Natural killer cell (primary cell): ENCODE measurements at regions of chr12 and their contacts with region 1.

Region 1: DNA sequence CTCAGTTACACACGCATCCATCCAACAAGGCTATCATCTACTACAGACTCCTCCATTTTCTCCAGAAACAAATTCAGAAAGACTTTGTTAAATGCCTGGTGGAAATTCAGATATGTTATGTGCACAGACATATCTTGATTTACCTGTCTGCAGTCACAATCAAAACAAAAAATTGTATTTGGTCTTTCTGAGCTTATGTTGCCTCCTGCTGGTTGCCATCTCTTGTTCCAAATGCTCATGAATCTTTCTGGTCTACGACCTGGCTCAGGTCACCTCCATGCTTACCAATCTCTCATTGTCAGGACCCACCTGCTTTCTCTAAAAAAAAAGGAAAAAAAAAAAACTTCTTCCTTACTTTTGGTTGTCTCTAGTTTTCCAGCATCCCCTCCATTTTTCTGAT is 169.2 kb upstream of the PLXNC1 start:
- DNase-seq: peak in 1 of 2 donors; percentile 59
- ATAC-seq: peak in 1 of 3 donors; percentile 55
- H3K4me3 ChIP-seq: no peak overlapping the region
- H3K4me3 Mint-ChIP-seq: no peak overlapping the region
- H3K27ac ChIP-seq: no peak overlapping the region
- H3K27ac Mint-ChIP-seq: peak overlapping the region in 1 of 2 donors; percentile 57
- H3K4me1 ChIP-seq: peaks cover 14% of the 10 kb centered on the region
- H3K4me1 Mint-ChIP-seq: peaks cover 12 to 38% of the 10 kb centered on the region in 2 donors
- H3K27me3 ChIP-seq: no peaks in the 10 kb centered on the region
- H3K27me3 Mint-ChIP-seq: peaks cover 0 to 8% of the 10 kb centered on the region in 2 donors
- CTCF ChIP-seq: peak; percentile 22

Region 2: DNA sequence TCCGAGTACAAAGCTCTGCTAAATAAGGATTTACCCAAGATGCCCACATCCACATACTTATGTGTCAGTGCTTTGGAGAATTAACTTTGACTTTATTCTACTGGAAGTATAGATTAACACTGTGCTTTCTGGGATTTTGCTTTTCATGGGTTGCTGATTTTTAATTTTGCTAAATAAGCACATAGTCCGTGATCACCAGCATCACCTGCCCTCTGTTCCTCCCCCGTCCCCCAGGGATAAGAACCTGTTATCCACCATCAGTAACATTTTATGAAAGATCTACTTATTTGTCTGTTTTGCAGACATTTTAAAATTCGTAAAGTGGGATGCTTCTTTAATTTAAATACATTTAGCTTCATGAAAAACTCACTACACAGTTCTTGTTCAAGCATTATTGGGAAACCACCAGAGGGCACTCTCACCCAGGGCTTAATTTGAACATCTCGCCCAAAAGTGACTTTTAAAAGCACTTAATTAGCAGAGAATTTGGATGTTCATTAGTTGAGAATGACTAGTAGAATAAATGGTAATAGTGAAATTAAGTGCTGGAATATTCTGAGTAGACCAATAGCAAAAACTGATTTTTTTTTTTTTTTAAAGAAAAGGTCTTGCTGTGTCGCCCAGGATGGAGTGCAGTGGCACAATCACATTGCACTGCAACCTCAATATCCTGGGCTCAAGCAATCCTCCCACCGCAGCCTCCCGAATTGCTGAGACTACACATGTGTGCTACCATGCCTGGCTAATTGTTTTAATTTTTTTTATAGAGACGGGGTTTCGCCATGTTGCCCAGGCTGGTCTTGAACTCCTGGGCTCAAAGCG is 476.2 kb before region 1 on chr12:
- intact Hi-C with region 1: loop called (anchors 2 kb)
- DNase-seq: peak; percentile 43 to 80
- ATAC-seq: peak; percentile 53 to 66 (median 54)
- H3K4me3 ChIP-seq: no peak overlapping the region
- H3K4me3 Mint-ChIP-seq: no peak overlapping the region
- H3K27ac ChIP-seq: no peak overlapping the region
- H3K27ac Mint-ChIP-seq: no peak overlapping the region
- H3K4me1 ChIP-seq: no peaks in the 10 kb centered on the region
- H3K4me1 Mint-ChIP-seq: peaks cover 5% of the 10 kb centered on the region in 2 donors
- H3K27me3 ChIP-seq: no peaks in the 10 kb centered on the region
- H3K27me3 Mint-ChIP-seq: no peaks in the 10 kb centered on the region
- CTCF ChIP-seq: peak; percentile 88

Region 3: DNA sequence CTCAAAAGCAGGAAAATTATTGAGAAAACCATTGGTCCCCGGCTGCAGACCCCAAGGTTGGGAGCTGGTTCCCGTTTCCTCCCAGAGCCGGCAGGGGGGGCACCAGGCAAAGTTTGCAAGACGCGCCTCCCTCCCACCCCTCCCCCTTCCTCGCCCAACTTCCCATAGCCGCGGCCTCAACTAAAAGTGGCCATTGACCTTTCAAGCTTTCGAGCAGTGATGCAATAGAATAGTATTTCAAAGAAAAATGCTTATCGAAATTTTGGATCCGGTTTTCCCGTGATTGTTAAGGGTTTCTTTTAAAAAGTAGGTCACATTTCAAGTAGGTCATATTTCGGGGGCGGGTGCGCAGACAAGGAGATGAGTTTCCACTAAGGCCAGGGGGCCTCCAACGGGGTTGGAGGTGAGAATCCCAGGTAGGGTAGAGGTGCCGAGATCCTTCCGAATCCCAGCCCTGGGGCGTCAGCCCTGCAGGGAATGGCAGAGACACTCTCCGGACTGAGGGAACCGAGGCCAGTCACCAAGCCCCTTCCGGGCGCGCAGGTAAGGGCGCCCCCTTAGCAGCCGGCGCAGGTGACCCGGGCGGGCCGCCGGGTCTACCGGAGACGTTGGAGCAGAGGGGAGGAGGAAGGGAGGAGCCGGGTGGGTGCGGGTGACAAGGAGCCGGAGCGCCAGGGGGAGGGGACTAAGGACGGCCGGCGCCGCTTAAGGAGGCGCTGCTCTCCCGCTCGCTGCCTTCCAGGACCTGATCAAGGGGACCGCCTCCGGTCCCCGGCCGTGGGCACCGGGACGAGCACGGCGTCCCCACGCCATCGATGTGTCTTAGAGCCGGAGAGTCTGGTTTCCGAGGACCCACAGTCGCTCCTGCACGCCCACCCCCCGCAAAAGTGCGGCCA is 409.3 kb before region 1 on chr12:
- intact Hi-C with region 1: loop called (anchors 5 kb)
- DNase-seq: peak; percentile 66 to 85
- ATAC-seq: peak; percentile 40 to 63 (median 46)
- H3K4me3 ChIP-seq: peak overlapping the region; percentile 95
- H3K4me3 Mint-ChIP-seq: peak overlapping the region; percentile 95
- H3K27ac ChIP-seq: peak overlapping the region; percentile 80
- H3K27ac Mint-ChIP-seq: peak overlapping the region; percentile 86 to 89
- H3K4me1 ChIP-seq: peaks cover 26% of the 10 kb centered on the region
- H3K4me1 Mint-ChIP-seq: peaks cover 31 to 38% of the 10 kb centered on the region in 2 donors
- H3K27me3 ChIP-seq: peaks cover 5% of the 10 kb centered on the region
- H3K27me3 Mint-ChIP-seq: peaks cover 0 to 4% of the 10 kb centered on the region in 2 donors
- CTCF ChIP-seq: peak; percentile 72

Region 4: DNA sequence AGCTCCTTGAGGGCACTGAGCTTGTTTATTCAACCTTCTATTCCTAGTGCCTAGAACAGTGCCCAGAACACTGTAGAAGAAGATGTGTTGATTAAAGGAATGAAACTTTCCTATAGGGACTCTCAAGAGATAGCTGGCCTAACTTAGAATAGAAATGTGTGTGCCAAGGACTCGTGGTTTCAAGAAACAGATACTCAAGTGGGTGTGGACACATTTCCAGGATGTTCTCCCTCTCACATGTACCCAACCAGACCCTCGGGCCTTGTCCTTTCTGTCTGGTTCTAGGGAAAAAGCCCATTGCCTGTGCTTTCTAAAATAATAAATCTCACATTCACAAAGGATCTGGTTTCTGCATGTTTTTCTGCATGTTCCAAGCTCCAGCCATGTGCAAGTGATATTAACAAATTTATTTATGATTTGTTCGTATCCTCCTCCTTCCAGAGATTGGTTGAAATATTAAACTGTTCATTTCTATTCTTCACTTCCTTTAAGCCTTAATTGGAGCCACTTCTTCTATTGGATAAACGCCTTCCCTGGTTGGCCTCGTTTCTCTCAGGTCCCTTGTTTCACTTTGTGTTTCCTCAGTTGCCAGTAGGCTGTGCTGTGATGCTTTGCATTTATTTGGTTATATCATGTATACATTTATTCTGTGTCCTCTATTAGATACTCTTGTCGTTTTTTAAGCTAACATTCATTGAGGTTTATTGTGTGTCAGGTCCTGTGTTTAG is 212.2 kb before region 1 on chr12:
- intact Hi-C with region 1: loop called (anchors 1 kb)
- DNase-seq: peak in 1 of 2 donors; percentile 67
- ATAC-seq: peak; percentile 71 to 84 (median 76)
- H3K4me3 ChIP-seq: no peak overlapping the region
- H3K4me3 Mint-ChIP-seq: peak overlapping the region; percentile 11
- H3K27ac ChIP-seq: peak overlapping the region; percentile 43
- H3K27ac Mint-ChIP-seq: peak overlapping the region; percentile 57 to 76
- H3K4me1 ChIP-seq: peaks cover 2% of the 10 kb centered on the region
- H3K4me1 Mint-ChIP-seq: peaks cover 29 to 38% of the 10 kb centered on the region in 2 donors
- H3K27me3 ChIP-seq: no peaks in the 10 kb centered on the region
- H3K27me3 Mint-ChIP-seq: no peaks in the 10 kb centered on the region
- CTCF ChIP-seq: peak; percentile 66

Region 5: GRCh38 chr12:94305130-94305957 is 326.2 kb after region 1 on chr12:
- intact Hi-C with region 1: no loop called
- DNase-seq: no peak
- ATAC-seq: no peak
- H3K4me3 ChIP-seq: no peak overlapping the region
- H3K4me3 Mint-ChIP-seq: no peak overlapping the region
- H3K27ac ChIP-seq: no peak overlapping the region
- H3K27ac Mint-ChIP-seq: no peak overlapping the region
- H3K4me1 ChIP-seq: no peaks in the 10 kb centered on the region
- H3K4me1 Mint-ChIP-seq: peaks cover 6 to 9% of the 10 kb centered on the region in 2 donors
- H3K27me3 ChIP-seq: no peaks in the 10 kb centered on the region
- H3K27me3 Mint-ChIP-seq: no peaks in the 10 kb centered on the region
- CTCF ChIP-seq: no peak